ENCODE measurements at regions of chrX and their contacts with region 1.

Region 1: GRCh38 chrX:3518870-3519269 is 172.4 kb upstream of the MXRA5 start:
- DNase-seq: peak; percentile 87
- H3K4me3 Mint-ChIP-seq: peak overlapping the region; percentile 55
- H3K27ac Mint-ChIP-seq: no peak overlapping the region
- H3K4me1 Mint-ChIP-seq: peaks cover 27% of the 10 kb centered on the region
- H3K27me3 Mint-ChIP-seq: no peaks in the 10 kb centered on the region
- CTCF ChIP-seq: no peak

Region 2: DNA sequence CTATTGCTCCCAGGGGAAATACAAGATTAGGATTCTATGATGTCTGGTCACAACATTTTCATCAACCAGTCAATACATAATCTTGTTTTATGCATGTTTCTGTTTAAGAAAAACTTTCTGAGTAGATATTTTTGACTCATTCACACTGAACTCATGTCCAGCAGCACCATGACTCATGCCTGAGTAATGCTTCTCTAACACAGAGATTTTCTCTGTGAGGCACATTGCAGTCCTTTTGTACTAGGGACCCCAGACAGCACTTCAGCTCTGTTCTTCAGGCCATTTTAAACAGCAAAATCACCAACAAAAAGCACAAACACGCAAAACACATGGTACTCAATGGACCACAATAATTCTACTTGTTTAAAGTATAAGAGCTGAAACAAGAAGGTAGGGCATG is 256.0 kb before region 1 on chrX:
- CTCF ChIA-PET with region 1: no interaction called
- POLR2A ChIA-PET with region 1: no interaction called
- intact Hi-C with region 1: loop called (anchors 10 kb)
- DNase-seq: peak; percentile 82
- H3K4me3 Mint-ChIP-seq: peak overlapping the region; percentile 44
- H3K27ac Mint-ChIP-seq: peak overlapping the region; percentile 36
- H3K4me1 Mint-ChIP-seq: peaks cover 29% of the 10 kb centered on the region
- H3K27me3 Mint-ChIP-seq: no peaks in the 10 kb centered on the region
- CTCF ChIP-seq: no peak

Region 3: GRCh38 chrX:3815896-3816664 is 297.2 kb after region 1 on chrX:
- CTCF ChIA-PET with region 1: no interaction called
- POLR2A ChIA-PET with region 1: no interaction called
- intact Hi-C with region 1: no loop called
- DNase-seq: peak; percentile 46
- H3K4me3 Mint-ChIP-seq: peak overlapping the region; percentile 92
- H3K27ac Mint-ChIP-seq: peak overlapping the region; percentile 91
- H3K4me1 Mint-ChIP-seq: peaks cover 15% of the 10 kb centered on the region
- H3K27me3 Mint-ChIP-seq: no peaks in the 10 kb centered on the region
- CTCF ChIP-seq: no peak

Measured in MCF 10A (cell line).